Activated CD4-positive, alpha-beta T cell treated with anti-CD3 and anti-CD28 coated beads for 36 hours (primary cell): ENCODE measurements at regions of chr2 and their contacts with region 1.

Region 1: DNA sequence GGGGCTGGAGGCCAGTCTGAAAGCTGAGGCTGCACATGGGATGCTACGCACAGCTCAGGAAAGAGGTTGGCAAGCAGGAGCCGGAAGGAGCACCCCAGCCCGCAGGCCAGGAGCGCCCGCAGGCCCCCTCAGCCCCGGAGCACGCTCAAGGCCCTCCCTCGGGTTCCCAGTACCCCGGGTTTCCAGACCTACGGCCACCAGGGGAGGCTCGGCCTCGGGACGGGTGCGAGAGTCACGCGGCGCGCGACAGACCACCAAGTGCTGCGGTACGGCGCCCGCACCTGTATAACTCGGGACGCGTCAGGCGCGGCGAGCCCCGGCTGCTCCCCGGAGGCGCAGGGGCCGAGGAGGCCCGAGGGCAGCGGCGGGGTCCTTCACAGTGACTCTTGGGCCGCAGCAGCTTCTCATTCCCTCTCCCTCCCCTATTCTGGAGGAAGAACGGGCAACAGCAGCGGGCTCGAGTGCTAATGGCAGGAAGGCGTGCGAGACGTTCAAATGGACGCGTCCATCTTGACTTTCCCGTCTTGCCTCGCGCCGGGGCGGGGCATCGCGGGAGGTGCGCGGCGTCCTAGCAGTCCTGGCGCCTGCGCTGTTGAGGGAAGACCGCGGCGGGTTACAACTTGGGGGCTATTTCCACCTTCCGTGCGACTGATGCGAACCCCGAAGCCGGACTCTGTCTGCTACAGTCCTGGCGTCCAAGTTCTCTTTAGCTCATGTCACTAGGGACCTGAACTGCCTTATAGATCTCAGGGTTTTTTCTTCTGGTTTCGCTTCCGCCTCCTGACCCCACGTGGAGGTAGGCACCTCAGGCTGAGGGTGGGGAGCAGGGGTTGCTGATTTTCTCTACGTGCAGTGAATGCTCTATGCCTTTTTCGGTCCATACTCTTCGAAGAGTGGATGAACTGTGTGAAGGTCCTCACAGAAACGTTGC is at the start of gene ANAPC1:
- DNase-seq: peak; percentile 92
- ATAC-seq: peak; percentile 95
- H3K4me3 Mint-ChIP-seq: peak within 1 kb of the TSS; percentile 85
- H3K27ac Mint-ChIP-seq: peak within 1 kb of the TSS; percentile 93
- H3K4me1 Mint-ChIP-seq: peaks cover 24% of the 10 kb centered on the region
- H3K27me3 Mint-ChIP-seq: no peaks in the 10 kb centered on the region
- total RNA-seq, gene ANAPC1: 85.1 to 113 TPM

Region 2: GRCh38 chr2:111930875-111931274 is 46.9 kb after region 1 on chr2:
- CTCF ChIA-PET with region 1: no interaction called
- POLR2A ChIA-PET with region 1: no interaction called
- intact Hi-C with region 1: loop called in 1 of 2 experiments (anchors 2 kb)
- DNase-seq: peak; percentile 50
- ATAC-seq: peak; percentile 95
- H3K4me3 Mint-ChIP-seq: no peak overlapping the region
- H3K27ac Mint-ChIP-seq: peak overlapping the region; percentile 86
- H3K4me1 Mint-ChIP-seq: peaks cover 15% of the 10 kb centered on the region
- H3K27me3 Mint-ChIP-seq: peaks cover 9% of the 10 kb centered on the region

Region 3: DNA sequence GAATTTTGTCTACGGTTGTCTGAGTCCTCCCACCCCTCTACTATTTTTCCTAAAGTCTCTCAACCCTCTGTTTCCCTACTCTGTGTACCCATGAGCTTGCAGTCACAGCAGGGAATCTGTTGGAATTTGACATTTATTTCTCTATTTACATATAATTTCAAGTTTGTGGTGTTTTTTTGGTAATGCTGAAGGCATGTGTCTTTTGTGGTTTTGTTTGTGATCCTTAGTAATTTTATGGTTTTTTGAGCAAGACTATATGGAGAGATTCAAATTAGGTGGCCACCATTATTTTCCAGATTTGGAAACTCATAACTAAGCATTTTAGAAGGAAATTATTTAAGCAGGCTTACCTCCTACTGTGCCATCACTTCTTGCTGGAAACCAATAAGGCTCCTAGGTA is 227.0 kb after region 1 on chr2:
- CTCF ChIA-PET with region 1: no interaction called
- POLR2A ChIA-PET with region 1: no interaction called
- intact Hi-C with region 1: no loop called
- DNase-seq: no peak
- ATAC-seq: no peak
- H3K4me3 Mint-ChIP-seq: no peak overlapping the region
- H3K27ac Mint-ChIP-seq: no peak overlapping the region
- H3K4me1 Mint-ChIP-seq: peaks cover 18% of the 10 kb centered on the region
- H3K27me3 Mint-ChIP-seq: no peaks in the 10 kb centered on the region

Region 4: DNA sequence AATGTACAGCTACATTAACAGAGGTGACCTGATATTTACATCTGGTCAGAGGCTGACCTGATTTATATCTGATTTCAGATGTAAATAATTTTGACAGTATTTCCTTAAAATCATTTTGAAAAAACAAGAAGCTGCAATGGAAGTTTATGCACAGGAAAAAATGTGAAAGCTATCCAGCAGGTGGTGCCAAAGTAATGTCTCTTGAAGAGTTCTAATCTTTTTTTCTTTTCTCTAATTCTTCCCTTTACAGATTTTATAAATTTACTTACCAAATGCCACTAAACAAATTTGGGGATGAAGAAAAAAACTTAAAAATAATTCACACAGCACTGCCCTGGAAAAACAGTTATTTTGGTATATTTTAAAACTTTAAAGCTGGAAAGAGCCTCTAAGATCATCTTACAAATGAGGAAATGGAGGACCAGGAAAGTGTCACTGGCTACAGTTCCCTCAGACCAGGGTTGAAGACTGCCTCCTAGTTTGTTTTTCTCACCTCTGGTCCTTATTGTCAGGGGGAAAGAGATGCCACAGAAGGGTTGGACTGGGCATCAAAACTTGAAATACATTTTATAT is 237.8 kb after region 1 on chr2:
- CTCF ChIA-PET with region 1: no interaction called
- POLR2A ChIA-PET with region 1: no interaction called
- intact Hi-C with region 1: loop called in 1 of 2 experiments (anchors 10 kb)
- DNase-seq: peak; percentile 62
- ATAC-seq: no peak
- H3K4me3 Mint-ChIP-seq: no peak overlapping the region
- H3K27ac Mint-ChIP-seq: no peak overlapping the region
- H3K4me1 Mint-ChIP-seq: peaks cover 12% of the 10 kb centered on the region
- H3K27me3 Mint-ChIP-seq: no peaks in the 10 kb centered on the region

Region 5: DNA sequence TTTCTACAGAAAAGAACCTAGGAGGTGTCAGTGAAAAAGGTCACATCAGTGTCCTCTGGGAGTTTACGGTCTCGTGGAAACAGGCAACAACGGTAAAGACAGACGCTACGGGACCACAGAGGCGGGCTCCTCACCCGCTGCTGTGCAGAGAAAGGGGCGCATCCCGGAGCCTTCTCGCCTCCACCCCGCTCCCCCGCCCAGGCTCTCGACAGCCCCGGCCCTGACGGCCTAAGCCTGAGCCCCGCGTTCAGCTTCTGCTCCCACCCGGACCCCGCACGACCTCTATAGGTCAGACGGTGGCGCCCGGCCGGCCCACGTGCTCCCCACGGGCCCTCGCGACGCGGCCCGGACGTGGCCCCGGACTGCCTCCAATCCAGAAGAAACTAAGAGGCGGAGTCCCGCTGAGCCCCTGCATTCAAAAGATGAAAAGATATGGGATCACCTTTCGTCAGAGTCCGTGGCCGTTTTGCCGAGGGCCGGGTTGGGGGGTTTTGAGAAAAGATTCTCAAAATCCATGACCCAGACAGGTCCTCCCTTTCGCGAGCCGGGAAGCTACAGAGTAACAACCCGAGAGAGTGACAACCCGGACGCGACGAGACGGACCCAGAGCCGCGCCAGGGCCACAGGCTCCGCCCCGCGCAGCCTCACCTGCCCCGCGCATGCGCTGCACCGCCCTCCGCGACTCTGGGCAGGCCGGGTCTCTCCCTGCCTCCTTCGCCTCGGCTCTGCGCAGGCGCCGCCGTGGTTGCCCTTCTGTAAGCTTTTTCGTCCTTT is 370.7 kb after region 1 on chr2 and contains the start of gene ZC3H8:
- CTCF ChIA-PET with region 1: no interaction called
- POLR2A ChIA-PET with region 1: interaction called, 5 read pairs
- intact Hi-C with region 1: loop called in 1 of 2 experiments (anchors 5 kb)
- DNase-seq: peak; percentile 98
- ATAC-seq: peak; percentile 92
- H3K4me3 Mint-ChIP-seq: no peak within 1 kb of the TSS
- H3K27ac Mint-ChIP-seq: peak within 1 kb of the TSS; percentile 88
- H3K4me1 Mint-ChIP-seq: peaks cover 19% of the 10 kb centered on the region
- H3K27me3 Mint-ChIP-seq: no peaks in the 10 kb centered on the region
- total RNA-seq, gene ZC3H8: 21.6 to 27.1 TPM

Region 6: DNA sequence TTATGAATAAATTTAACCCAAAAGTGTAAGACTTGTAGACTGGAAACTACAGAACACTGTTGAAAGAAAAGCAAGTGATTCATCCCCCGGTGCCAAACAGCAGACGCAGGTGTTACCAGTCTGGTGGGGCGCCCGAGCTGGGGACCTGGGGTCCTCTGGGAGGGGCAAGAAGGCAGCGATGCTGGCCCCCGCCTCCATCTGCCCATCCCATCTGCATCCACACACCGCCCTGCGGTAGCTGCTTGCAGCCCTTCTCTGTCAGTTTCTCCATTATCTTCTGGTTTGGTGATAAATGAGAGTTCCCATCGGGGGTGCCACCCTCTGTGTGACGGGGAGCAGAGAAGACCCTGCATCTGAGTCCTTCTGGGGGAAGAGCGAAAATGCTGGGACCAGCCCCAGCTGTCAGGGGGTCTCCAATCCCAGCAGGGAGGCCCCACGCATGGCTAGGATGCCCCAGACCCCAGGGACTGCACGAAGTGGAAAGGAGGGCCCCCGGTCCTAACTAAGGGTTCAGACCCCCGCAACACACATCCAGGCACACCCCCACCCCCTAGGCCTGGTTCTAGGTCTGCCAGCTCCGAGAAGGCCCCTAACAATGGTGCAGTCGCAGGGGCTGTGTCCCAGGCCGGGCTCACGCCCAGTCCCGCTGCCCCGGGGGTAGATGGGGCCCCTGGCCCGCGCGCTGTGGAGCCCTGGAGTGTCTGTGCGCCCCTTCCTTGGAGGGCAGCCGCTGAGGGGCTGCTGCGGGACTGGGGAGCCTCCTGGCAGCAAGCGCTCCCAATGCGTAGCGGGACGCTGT is 550.2 kb after region 1 on chr2:
- CTCF ChIA-PET with region 1: no interaction called
- POLR2A ChIA-PET with region 1: no interaction called
- intact Hi-C with region 1: loop called in 1 of 2 experiments (anchors 10 kb)
- DNase-seq: no peak
- ATAC-seq: no peak
- H3K4me3 Mint-ChIP-seq: peak overlapping the region; percentile 65
- H3K27ac Mint-ChIP-seq: no peak overlapping the region
- H3K4me1 Mint-ChIP-seq: peaks cover 10% of the 10 kb centered on the region
- H3K27me3 Mint-ChIP-seq: peaks cover 5% of the 10 kb centered on the region

Region 7: GRCh38 chr2:112542123-112542983 is 658.4 kb after region 1 on chr2 and contains the start of gene POLR1B:
- CTCF ChIA-PET with region 1: no interaction called
- POLR2A ChIA-PET with region 1: no interaction called
- intact Hi-C with region 1: loop called in 1 of 2 experiments (anchors 1 kb)
- DNase-seq: peak; percentile 87
- ATAC-seq: peak; percentile 85
- H3K4me3 Mint-ChIP-seq: no peak within 1 kb of the TSS
- H3K27ac Mint-ChIP-seq: no peak within 1 kb of the TSS
- H3K4me1 Mint-ChIP-seq: peaks cover 18% of the 10 kb centered on the region
- H3K27me3 Mint-ChIP-seq: no peaks in the 10 kb centered on the region
- total RNA-seq, gene POLR1B: 47.0 to 63.3 TPM